ENCODE measurements at regions of chr19 and their contacts with region 1.

Region 1: GRCh38 chr19:47210689-47211316 is 20.2 kb downstream of the BBC3 start:
- DNase-seq: peak in 8 of 10 donors; percentile 30 to 88 (median 57)
- H3K4me3 ChIP-seq: no peak overlapping the region
- H3K27ac ChIP-seq: peak overlapping the region in 39 of 59 donors; percentile 8 to 75 (median 48)
- H3K27me3 ChIP-seq: no peaks in the 10 kb centered on the region
- CTCF ChIP-seq: peak; percentile 73 to 97 (median 87)

Region 2: GRCh38 chr19:47157431-47158321 is 53.1 kb before region 1 on chr19:
- intact Hi-C with region 1: loop called in 1 of 2 experiments (anchors 10 kb)
- DNase-seq: peak in 1 of 10 donors; percentile 9
- H3K4me3 ChIP-seq: peak overlapping the region in 1 of 59 donors; percentile 2
- H3K27ac ChIP-seq: peak overlapping the region; percentile 17 to 89 (median 71)
- H3K27me3 ChIP-seq: no peaks in the 10 kb centered on the region
- CTCF ChIP-seq: peak in 3 of 56 donors; percentile 17 to 28 (median 22)